MCF 10A (cell line): ENCODE measurements at regions of chr5 and their contacts with region 1.

Region 1: GRCh38 chr5:148957591-148958202 is 105.2 kb downstream of the SH3TC2 start:
- DNase-seq: peak; percentile 71
- H3K4me3 Mint-ChIP-seq: no peak overlapping the region
- H3K27ac Mint-ChIP-seq: no peak overlapping the region
- H3K4me1 Mint-ChIP-seq: peaks cover 24% of the 10 kb centered on the region
- H3K27me3 Mint-ChIP-seq: no peaks in the 10 kb centered on the region
- CTCF ChIP-seq: peak; percentile 99

Region 2: DNA sequence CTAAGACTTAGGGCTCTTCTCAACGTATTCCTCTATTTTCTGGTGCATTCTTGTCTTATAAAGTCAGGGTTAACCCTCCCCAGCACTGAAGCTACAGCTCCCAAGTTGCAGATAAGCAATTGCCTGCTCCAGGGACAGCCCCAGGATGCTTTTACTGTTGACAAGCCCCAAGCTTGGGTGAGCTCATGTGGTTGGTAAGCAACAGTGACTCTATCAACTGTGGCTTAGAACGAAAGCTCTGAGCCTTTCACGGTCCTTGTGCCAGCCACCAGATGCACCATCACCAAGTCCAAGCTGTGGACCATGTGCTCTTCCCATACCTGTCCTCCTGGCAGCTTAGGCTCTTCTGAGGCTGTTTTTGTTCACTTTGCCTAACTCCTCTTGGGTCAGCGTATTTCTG is 117.7 kb before region 1 on chr5:
- CTCF ChIA-PET with region 1: interaction called, 12 read pairs
- POLR2A ChIA-PET with region 1: interaction called, 3 read pairs
- intact Hi-C with region 1: no loop called
- DNase-seq: no peak
- H3K4me3 Mint-ChIP-seq: no peak overlapping the region
- H3K27ac Mint-ChIP-seq: peak overlapping the region; percentile 29
- H3K4me1 Mint-ChIP-seq: peaks cover 44% of the 10 kb centered on the region
- H3K27me3 Mint-ChIP-seq: no peaks in the 10 kb centered on the region
- CTCF ChIP-seq: no peak

Region 3: GRCh38 chr5:148904440-148904839 is 53.3 kb before region 1 on chr5:
- CTCF ChIA-PET with region 1: interaction called, 15 read pairs
- POLR2A ChIA-PET with region 1: interaction called, 175 read pairs
- intact Hi-C with region 1: no loop called
- DNase-seq: no peak
- H3K4me3 Mint-ChIP-seq: no peak overlapping the region
- H3K27ac Mint-ChIP-seq: no peak overlapping the region
- H3K4me1 Mint-ChIP-seq: peaks cover 7% of the 10 kb centered on the region
- H3K27me3 Mint-ChIP-seq: no peaks in the 10 kb centered on the region
- CTCF ChIP-seq: no peak

Region 4: GRCh38 chr5:148939676-148940075 is 18.0 kb before region 1 on chr5:
- CTCF ChIA-PET with region 1: interaction called, 14 read pairs
- POLR2A ChIA-PET with region 1: interaction called, 4 read pairs
- intact Hi-C with region 1: no loop called
- DNase-seq: peak; percentile 27
- H3K4me3 Mint-ChIP-seq: no peak overlapping the region
- H3K27ac Mint-ChIP-seq: no peak overlapping the region
- H3K4me1 Mint-ChIP-seq: peaks cover 32% of the 10 kb centered on the region
- H3K27me3 Mint-ChIP-seq: no peaks in the 10 kb centered on the region
- CTCF ChIP-seq: no peak

Region 5: GRCh38 chr5:148998174-148998797 is 40.6 kb after region 1 on chr5:
- CTCF ChIA-PET with region 1: interaction called, 1,118 read pairs
- POLR2A ChIA-PET with region 1: interaction called, 1,127 read pairs
- intact Hi-C with region 1: loop called (anchors 1 kb)
- DNase-seq: peak; percentile 93
- H3K4me3 Mint-ChIP-seq: no peak overlapping the region
- H3K27ac Mint-ChIP-seq: peak overlapping the region; percentile 73
- H3K4me1 Mint-ChIP-seq: peaks cover 60% of the 10 kb centered on the region
- H3K27me3 Mint-ChIP-seq: no peaks in the 10 kb centered on the region
- CTCF ChIP-seq: peak; percentile 79

Region 6: DNA sequence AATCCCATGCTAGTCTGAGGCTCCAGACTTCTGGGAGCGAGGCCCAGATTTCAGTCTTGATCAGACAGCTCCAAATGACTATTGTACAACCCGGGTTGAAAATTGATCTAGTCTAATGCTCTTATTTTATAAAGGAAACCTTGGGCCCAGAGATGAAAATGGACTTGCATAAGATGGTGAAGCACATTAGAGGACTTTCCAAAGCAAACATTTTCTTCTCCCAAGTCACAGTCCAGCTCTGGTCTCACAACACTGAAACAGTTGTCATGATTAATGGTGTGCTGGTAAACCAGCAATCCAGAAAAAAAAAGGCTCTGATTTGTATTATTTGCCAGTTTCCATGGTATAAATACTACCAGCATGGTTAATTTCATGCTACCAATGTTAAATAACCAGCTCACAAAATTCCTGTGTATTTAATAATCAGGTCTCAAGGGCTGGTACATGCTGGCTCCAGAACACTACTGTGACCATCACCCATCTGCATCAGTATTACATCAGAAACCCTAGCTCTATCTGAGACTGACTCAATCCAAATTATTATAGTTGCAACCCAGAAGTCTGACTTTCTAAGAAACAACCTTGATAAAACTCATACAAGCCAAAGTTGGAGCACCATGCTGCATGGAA is 151.1 kb after region 1 on chr5:
- CTCF ChIA-PET with region 1: no interaction called
- POLR2A ChIA-PET with region 1: no interaction called
- intact Hi-C with region 1: no loop called
- DNase-seq: no peak
- H3K4me3 Mint-ChIP-seq: no peak overlapping the region
- H3K27ac Mint-ChIP-seq: no peak overlapping the region
- H3K4me1 Mint-ChIP-seq: peaks cover 18% of the 10 kb centered on the region
- H3K27me3 Mint-ChIP-seq: no peaks in the 10 kb centered on the region
- CTCF ChIP-seq: no peak

Region 7: GRCh38 chr5:149254506-149254905 is 296.8 kb after region 1 on chr5:
- CTCF ChIA-PET with region 1: no interaction called
- POLR2A ChIA-PET with region 1: no interaction called
- intact Hi-C with region 1: no loop called
- DNase-seq: peak; percentile 43
- H3K4me3 Mint-ChIP-seq: no peak overlapping the region
- H3K27ac Mint-ChIP-seq: peak overlapping the region; percentile 10
- H3K4me1 Mint-ChIP-seq: peaks cover 13% of the 10 kb centered on the region
- H3K27me3 Mint-ChIP-seq: no peaks in the 10 kb centered on the region
- CTCF ChIP-seq: no peak